IMR-90 (cell line): ENCODE measurements at regions of chr11 and their contacts with region 1.

Region 1: GRCh38 chr11:86218125-86219084 is 26.1 kb upstream of the EED start:
- DNase-seq: peak; percentile 76
- ATAC-seq: peak; percentile 100
- H3K4me3 ChIP-seq: peak overlapping the region; percentile 27; the same call in 1 of the 2 replicates
- H3K27ac ChIP-seq: no peak overlapping the region
- H3K4me1 ChIP-seq: no peaks in the 10 kb centered on the region; the same call in 1 of the 2 replicates
- H3K27me3 ChIP-seq: peaks cover 6% of the 10 kb centered on the region; the same call in 1 of the 2 replicates
- CTCF ChIP-seq: peak; percentile 91
- POLR2A ChIP-seq: peak; percentile 9; the same call in 1 of the 2 replicates
- RAD21 ChIP-seq: peak; percentile 91

Region 2: DNA sequence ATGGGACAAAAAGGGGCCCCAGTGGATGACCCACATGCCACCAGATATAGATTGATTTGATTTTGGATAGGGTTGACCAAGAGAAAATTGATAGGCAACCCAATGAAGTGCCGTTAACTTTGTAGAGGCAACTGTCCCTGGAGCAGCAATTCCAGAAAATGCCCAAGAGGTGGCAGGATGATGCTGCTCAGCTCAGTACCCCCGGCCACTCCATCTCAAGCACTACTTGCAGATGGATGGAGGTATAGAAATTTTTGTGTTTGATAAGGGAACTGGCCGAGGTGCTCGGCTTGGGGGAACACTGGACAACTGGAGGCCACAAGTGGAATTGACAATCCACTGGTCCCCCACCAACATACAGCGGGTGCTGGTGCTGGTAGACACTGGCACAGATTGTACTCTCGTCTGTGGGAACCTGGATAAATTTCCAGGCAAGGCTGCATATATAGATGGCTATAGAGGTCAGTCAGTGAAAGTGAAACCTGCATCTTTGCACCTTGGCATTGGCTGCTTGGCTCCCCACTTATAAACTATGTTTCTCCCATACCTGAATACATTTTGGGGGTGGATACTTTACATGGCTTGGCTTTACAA is 276.9 kb before region 1 on chr11:
- CTCF ChIA-PET with region 1: interaction called, 3 read pairs
- POLR2A ChIA-PET with region 1: interaction called, 3 read pairs
- dilution Hi-C with region 1: no loop called
- in situ Hi-C with region 1: no loop called
- intact Hi-C with region 1: loop called (anchors 1 kb)
- DNase-seq: peak; percentile 74
- ATAC-seq: peak; percentile 93
- H3K4me3 ChIP-seq: no peak overlapping the region
- H3K27ac ChIP-seq: no peak overlapping the region
- H3K4me1 ChIP-seq: peaks cover 5% of the 10 kb centered on the region; the same call in 1 of the 2 replicates
- H3K27me3 ChIP-seq: no peaks in the 10 kb centered on the region
- CTCF ChIP-seq: peak; percentile 74
- POLR2A ChIP-seq: no peak
- RAD21 ChIP-seq: peak; percentile 81

Region 3: GRCh38 chr11:86041975-86042378 is 176.4 kb before region 1 on chr11:
- CTCF ChIA-PET with region 1: interaction called, 3 read pairs
- POLR2A ChIA-PET with region 1: no interaction called
- dilution Hi-C with region 1: no loop called
- in situ Hi-C with region 1: loop called (anchors 25 kb)
- intact Hi-C with region 1: loop called (anchors 1 kb)
- DNase-seq: peak; percentile 94
- ATAC-seq: peak; percentile 89
- H3K4me3 ChIP-seq: no peak overlapping the region
- H3K27ac ChIP-seq: no peak overlapping the region
- H3K4me1 ChIP-seq: peaks cover 13% of the 10 kb centered on the region
- H3K27me3 ChIP-seq: no peaks in the 10 kb centered on the region
- CTCF ChIP-seq: peak; percentile 94
- POLR2A ChIP-seq: no peak
- RAD21 ChIP-seq: peak; percentile 90

Region 4: GRCh38 chr11:86335122-86335767 is 116.8 kb after region 1 on chr11:
- CTCF ChIA-PET with region 1: no interaction called
- POLR2A ChIA-PET with region 1: no interaction called
- dilution Hi-C with region 1: no loop called
- in situ Hi-C with region 1: no loop called
- intact Hi-C with region 1: no loop called
- DNase-seq: no peak
- ATAC-seq: no peak
- H3K4me3 ChIP-seq: no peak overlapping the region
- H3K27ac ChIP-seq: no peak overlapping the region
- H3K4me1 ChIP-seq: peaks cover 2% of the 10 kb centered on the region; the same call in 1 of the 2 replicates
- H3K27me3 ChIP-seq: no peaks in the 10 kb centered on the region
- CTCF ChIP-seq: no peak
- POLR2A ChIP-seq: no peak
- RAD21 ChIP-seq: no peak